Heart right ventricle (tissue), 16 donors: ENCODE measurements at regions of chr9 and their contacts with region 1.

Region 1: GRCh38 chr9:37485389-37486219 is at the start of gene POLR1E:
- DNase-seq: peak; percentile 93 to 94
- ATAC-seq: peak; percentile 97 to 98 (median 98)
- H3K4me3 ChIP-seq: peak within 1 kb of the TSS; percentile 56 to 87 (median 72)
- H3K27ac ChIP-seq: peak within 1 kb of the TSS; percentile 11 to 91 (median 82)
- H3K4me1 ChIP-seq: peaks cover 9 to 30% (median 28%) of the 10 kb centered on the region in 9 donors
- H3K27me3 ChIP-seq: peaks cover 0 to 8% (median 3%) of the 10 kb centered on the region in 7 donors
- CTCF ChIP-seq: no peak
- total RNA-seq, gene POLR1E: 8.5 to 28.8 (median 20.4) TPM

Region 2: GRCh38 chr9:37511016-37512010 is 25.7 kb after region 1 on chr9:
- intact Hi-C with region 1: loop called in 1 of 10 experiments (anchors 2 kb)
- DNase-seq: no peak
- ATAC-seq: peak in 6 of 8 donors; percentile 11 to 54 (median 28)
- H3K4me3 ChIP-seq: no peak overlapping the region
- H3K27ac ChIP-seq: no peak overlapping the region
- H3K4me1 ChIP-seq: no peaks in the 10 kb centered on the region
- H3K27me3 ChIP-seq: no peaks in the 10 kb centered on the region
- CTCF ChIP-seq: peak in 2 of 9 donors; percentile 15 to 31

Region 3: DNA sequence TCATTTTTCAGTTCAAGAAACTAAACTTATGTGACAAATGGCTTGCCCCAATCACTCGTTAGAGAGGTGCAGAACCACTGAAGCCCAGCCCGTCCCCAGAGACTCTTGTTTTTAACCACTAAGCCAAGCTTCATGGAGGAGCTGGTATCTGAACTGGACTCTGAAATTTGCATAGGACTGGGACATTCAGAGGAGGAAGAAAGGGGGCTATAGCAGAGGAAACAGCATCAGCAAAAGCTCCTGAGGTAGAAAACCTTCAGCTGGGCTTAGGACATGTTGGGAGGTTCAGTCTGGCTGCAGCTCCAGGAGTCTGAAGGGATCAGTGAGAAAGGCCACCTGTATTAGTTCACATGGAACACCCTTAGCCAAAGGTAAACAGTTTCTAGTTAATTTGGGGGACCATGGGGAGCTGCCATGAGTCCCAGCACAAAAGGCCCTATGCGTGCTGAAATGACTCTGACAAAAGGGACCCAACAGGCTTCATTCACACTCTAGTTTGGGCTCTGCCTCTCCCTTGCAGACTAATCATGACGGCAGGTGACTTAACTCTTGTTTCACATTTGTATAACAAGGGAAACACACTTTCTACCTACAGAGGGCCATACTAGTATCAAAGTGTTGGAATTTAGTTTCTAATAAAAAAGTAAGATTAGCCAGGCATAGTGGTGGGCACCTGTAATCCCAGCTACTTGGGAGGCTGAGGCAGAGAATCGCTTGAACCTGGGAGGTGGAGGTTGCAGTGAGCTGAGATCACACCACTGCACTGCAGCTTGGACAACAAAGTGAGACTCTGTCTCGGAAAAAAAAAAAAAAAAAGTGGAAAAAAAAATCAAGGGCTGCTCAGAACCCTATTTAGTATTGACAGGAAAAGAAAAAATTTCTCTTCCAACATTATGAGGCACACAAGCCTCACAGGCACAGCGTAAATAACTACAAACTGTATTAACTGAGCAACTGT is 80.3 kb after region 1 on chr9:
- intact Hi-C with region 1: loop called in 4 of 10 experiments (anchors 2 to 10 kb)
- DNase-seq: no peak
- ATAC-seq: no peak
- H3K4me3 ChIP-seq: no peak overlapping the region
- H3K27ac ChIP-seq: no peak overlapping the region
- H3K4me1 ChIP-seq: no peaks in the 10 kb centered on the region
- H3K27me3 ChIP-seq: no peaks in the 10 kb centered on the region
- CTCF ChIP-seq: no peak

Region 4: DNA sequence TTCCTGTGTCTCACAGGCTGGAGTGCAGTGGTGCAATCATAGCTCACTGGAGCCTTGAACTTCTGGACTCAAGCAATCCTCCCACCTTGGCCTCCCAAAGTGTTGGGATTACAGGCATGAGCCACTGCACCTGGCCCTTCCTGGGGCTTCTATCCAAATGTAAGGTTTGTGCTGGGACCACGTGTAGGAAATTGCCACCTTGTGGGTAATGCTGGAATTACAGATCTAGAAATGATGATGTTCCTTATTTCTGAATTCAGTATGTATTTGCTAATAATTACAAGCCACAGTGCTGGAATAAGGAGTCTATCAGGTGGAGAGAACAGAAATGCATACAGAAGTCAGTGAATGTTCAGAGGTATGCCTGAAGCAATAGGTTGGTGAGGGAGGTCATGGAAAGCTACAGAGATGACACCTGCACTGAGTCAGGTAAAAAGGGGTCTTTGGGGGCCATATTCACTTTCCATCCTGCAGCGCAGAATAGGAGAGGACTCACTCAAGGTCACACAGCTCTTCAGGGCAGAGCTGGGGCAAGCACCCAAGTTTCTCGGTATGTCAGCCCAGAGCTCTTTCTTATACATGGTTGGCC is 947.4 kb after region 1 on chr9:
- intact Hi-C with region 1: loop called in 1 of 10 experiments (anchors 10 kb)
- DNase-seq: no peak
- ATAC-seq: peak in 3 of 8 donors; percentile 11 to 54 (median 22)
- H3K4me3 ChIP-seq: no peak overlapping the region
- H3K27ac ChIP-seq: no peak overlapping the region
- H3K4me1 ChIP-seq: peaks cover 0 to 5% (median 0%) of the 10 kb centered on the region in 9 donors
- H3K27me3 ChIP-seq: peaks cover 0 to 26% (median 14%) of the 10 kb centered on the region in 7 donors
- CTCF ChIP-seq: peak; percentile 27 to 65 (median 57)